Keratinocyte (primary cell): ENCODE measurements at regions of chr4 and their contacts with region 1.

Region 1: DNA sequence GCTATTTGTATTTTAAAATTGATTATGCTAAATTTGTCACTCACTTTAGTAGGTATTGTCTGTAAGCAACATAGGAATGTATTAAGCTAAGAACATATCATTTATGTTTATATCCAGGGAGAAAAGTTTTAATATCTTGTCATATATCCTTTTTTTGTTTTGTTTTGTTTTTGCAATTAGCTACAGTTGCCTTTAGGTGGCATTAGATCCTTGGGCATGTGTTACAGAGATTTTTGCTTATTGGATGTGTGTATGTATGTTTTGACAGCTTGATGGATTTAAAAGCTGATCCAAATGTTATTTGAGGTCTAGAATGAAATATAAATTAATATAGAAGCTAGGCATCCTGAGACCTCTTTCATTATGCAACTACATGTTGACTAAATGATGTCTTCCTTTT is 36.1 kb upstream of the OTUD4 start:
- DNase-seq: no peak
- H3K4me3 ChIP-seq: no peak overlapping the region
- H3K27ac ChIP-seq: no peak overlapping the region
- H3K4me1 ChIP-seq: no peaks in the 10 kb centered on the region
- H3K27me3 ChIP-seq: no peaks in the 10 kb centered on the region
- CTCF ChIP-seq: peak in 1 of 3 experiments; percentile 47

Region 2: DNA sequence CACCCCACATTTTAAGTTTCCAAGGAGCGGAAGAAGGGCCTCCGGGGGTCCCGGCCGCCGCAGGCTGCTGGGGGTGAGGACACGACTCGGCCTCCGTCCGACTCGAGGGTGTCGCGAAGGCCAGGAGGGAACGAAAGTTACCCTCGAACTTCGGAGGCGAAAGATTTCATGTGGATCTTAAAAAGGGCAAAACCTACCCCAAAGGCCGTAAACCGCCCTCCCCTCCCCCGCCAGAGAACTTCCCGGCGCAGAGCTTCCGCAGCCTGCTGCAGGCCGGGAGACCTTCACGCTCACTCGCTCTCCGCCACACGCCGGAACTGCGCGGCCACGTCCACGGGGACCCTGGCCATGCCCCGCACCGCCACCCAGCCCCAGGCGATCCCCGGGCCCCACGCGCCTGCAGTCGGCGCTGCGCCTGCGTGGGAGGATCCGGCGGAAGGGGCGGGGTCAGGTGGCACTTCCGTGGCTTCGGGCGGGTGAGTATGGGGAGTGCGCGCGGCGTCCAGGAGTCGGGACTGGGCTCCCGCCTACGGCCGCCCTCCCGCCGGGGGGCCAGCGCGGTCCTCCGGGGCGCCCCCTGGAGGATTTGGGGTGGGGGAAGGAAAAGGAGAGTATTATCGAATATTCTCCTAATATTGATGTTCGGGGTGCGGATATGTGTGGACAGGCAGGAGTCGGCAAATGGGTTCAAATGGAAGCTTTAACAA is 402.6 kb after region 1 on chr4 and contains the start of gene MMAA:
- dilution Hi-C with region 1: loop called (anchors 25 kb)
- DNase-seq: peak; percentile 30
- H3K4me3 ChIP-seq: peak within 1 kb of the TSS; percentile 68 to 98 (median 94)
- H3K27ac ChIP-seq: peak within 1 kb of the TSS; percentile 97
- H3K4me1 ChIP-seq: peaks cover 13% of the 10 kb centered on the region
- H3K27me3 ChIP-seq: no peaks in the 10 kb centered on the region
- CTCF ChIP-seq: peak; percentile 33 to 56 (median 53)
- polyA plus RNA-seq, gene MMAA: 6.1 to 9.4 TPM (median 7.1 TPM) in 3 replicates